HepG2 (cell line): ENCODE measurements at regions of chr10 and their contacts with region 1.

Region 1: GRCh38 chr10:6151087-6151977 is 51.4 kb upstream of the PFKFB3 start:
- DNase-seq: peak; percentile 36
- ATAC-seq: peak; percentile 81
- H3K4me3 ChIP-seq: no peak overlapping the region
- H3K27ac ChIP-seq: no peak overlapping the region
- H3K4me1 ChIP-seq: peaks cover 26% of the 10 kb centered on the region
- H3K27me3 ChIP-seq: peaks cover 0 to 6% of the 10 kb centered on the region in 2 experiments; a peak in 3 of 5 replicates
- CTCF ChIP-seq: peak; percentile 76
- EP300 ChIP-seq: no peak
- POLR2A ChIP-seq: no peak
- RAD21 ChIP-seq: no peak

Region 2: GRCh38 chr10:6108603-6109443 is 42.5 kb before region 1 on chr10:
- CTCF ChIA-PET with region 1: interaction called, 14 read pairs
- POLR2A ChIA-PET with region 1: no interaction called
- in situ Hi-C with region 1: no loop called
- intact Hi-C with region 1: loop called (anchors 1 kb)
- DNase-seq: peak; percentile 42
- ATAC-seq: no peak
- H3K4me3 ChIP-seq: no peak overlapping the region
- H3K27ac ChIP-seq: no peak overlapping the region
- H3K4me1 ChIP-seq: peaks cover 13% of the 10 kb centered on the region
- H3K27me3 ChIP-seq: no peaks in the 10 kb centered on the region
- CTCF ChIP-seq: peak; percentile 67
- EP300 ChIP-seq: no peak
- POLR2A ChIP-seq: no peak
- RAD21 ChIP-seq: peak; percentile 50; the same call in 1 of the 2 replicates

Region 3: GRCh38 chr10:7397049-7398035 is 1246.0 kb after region 1 on chr10:
- CTCF ChIA-PET with region 1: no interaction called
- POLR2A ChIA-PET with region 1: no interaction called
- in situ Hi-C with region 1: no loop called
- intact Hi-C with region 1: no loop called
- DNase-seq: no peak
- ATAC-seq: no peak
- H3K4me3 ChIP-seq: no peak overlapping the region
- H3K27ac ChIP-seq: no peak overlapping the region
- H3K4me1 ChIP-seq: no peaks in the 10 kb centered on the region
- H3K27me3 ChIP-seq: no peaks in the 10 kb centered on the region
- CTCF ChIP-seq: no peak
- EP300 ChIP-seq: no peak
- POLR2A ChIP-seq: no peak
- RAD21 ChIP-seq: no peak